Activated CD8-positive, alpha-beta memory T cell treated with anti-CD3 and anti-CD28 coated beads, Interleukin-2, amount 10 ng/mL, durations not matched to agents 7 days and 5 days (primary cell): ENCODE measurements at regions of chr20 and their contacts with region 1.

Region 1: DNA sequence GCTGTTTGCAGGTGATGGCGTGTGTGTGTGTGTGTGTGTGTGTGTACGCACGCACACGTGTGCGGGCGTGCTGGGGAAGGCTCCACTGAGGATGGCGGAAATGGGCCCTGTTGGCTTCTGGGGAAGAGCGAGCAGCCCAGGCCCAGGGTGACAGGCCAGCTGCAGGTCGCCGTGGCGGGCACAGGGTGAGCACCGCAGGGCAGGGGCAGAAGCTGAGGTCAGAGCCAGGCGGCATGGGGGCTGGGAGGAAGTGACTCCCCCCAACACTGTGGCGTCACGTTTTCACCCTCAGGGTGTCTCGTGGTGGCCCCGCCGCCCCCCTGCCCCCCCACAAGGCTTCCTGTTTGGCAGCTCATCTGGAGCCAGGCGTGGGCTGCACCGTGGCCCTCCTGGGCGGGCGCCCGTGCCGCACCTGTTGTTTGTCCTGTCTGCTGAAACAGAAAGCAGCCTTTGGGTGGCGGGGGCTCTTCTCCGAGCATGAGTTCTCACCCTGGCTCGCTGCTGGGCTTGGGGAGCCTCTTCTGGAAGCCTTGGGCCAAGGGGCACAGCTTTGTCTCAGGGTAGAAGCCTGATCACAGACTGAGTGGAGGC is 7.1 kb downstream of the RBM38 start:
- DNase-seq: peak; percentile 92
- ATAC-seq: peak; percentile 76
- H3K4me3 Mint-ChIP-seq: peak overlapping the region; percentile 64
- H3K27ac Mint-ChIP-seq: peak overlapping the region; percentile 86
- H3K4me1 Mint-ChIP-seq: peaks cover 90% of the 10 kb centered on the region
- H3K27me3 Mint-ChIP-seq: no peaks in the 10 kb centered on the region

Region 2: GRCh38 chr20:57048027-57048869 is 350.1 kb before region 1 on chr20:
- CTCF ChIA-PET with region 1: no interaction called
- DNase-seq: no peak
- ATAC-seq: no peak
- H3K4me3 Mint-ChIP-seq: no peak overlapping the region
- H3K27ac Mint-ChIP-seq: no peak overlapping the region
- H3K4me1 Mint-ChIP-seq: no peaks in the 10 kb centered on the region
- H3K27me3 Mint-ChIP-seq: no peaks in the 10 kb centered on the region

Region 3: GRCh38 chr20:57231951-57232428 is 166.3 kb before region 1 on chr20:
- CTCF ChIA-PET with region 1: no interaction called
- DNase-seq: no peak
- ATAC-seq: no peak
- H3K4me3 Mint-ChIP-seq: no peak overlapping the region
- H3K27ac Mint-ChIP-seq: no peak overlapping the region
- H3K4me1 Mint-ChIP-seq: no peaks in the 10 kb centered on the region
- H3K27me3 Mint-ChIP-seq: peaks cover 12% of the 10 kb centered on the region

Region 4: GRCh38 chr20:57329608-57330221 is 68.6 kb before region 1 on chr20 and contains the start of gene SPO11:
- CTCF ChIA-PET with region 1: no interaction called
- DNase-seq: peak; percentile 39
- ATAC-seq: no peak
- H3K4me3 Mint-ChIP-seq: no peak within 1 kb of the TSS
- H3K27ac Mint-ChIP-seq: no peak within 1 kb of the TSS
- H3K4me1 Mint-ChIP-seq: no peaks in the 10 kb centered on the region
- H3K27me3 Mint-ChIP-seq: peaks cover 53% of the 10 kb centered on the region
- total RNA-seq, gene SPO11: not detected

Region 5: DNA sequence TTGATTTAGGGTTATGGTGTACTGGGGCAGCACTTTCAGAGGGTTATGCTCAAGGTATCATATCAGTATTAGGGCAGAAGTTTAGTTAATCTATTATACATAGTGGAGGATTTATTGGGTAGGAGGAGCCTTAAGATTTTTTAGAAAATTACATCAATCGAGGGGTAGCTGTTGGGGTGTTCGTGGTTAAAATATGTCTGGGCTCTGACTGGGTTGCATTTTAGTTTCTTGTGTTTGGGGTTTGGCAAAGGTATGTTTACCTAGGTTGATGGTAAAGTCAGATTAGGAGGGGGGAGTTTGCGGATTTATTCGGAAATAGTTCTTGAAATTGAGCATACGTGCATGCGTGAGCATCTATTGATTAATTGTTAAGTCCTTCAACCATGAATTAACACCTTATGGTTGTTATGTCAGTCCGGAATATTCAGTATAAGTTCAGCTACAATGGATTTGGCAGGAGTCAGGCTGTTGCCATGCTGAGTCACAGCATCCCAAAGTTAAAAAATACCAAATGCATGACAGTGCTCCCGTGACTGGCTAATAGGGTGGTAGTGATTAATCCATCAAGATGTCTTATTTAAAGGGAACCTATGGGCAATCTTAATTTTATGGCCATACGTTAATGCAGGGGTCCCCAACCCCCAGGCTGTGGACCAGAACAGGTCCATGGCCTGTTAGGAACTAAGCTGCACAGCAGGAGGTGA is 37.0 kb before region 1 on chr20:
- CTCF ChIA-PET with region 1: no interaction called
- DNase-seq: no peak
- ATAC-seq: no peak
- H3K4me3 Mint-ChIP-seq: no peak overlapping the region
- H3K27ac Mint-ChIP-seq: no peak overlapping the region
- H3K4me1 Mint-ChIP-seq: no peaks in the 10 kb centered on the region
- H3K27me3 Mint-ChIP-seq: no peaks in the 10 kb centered on the region

Region 6: GRCh38 chr20:57382027-57382503 is 16.3 kb before region 1 on chr20:
- CTCF ChIA-PET with region 1: interaction called, 10 read pairs
- DNase-seq: no peak
- ATAC-seq: no peak
- H3K4me3 Mint-ChIP-seq: no peak overlapping the region
- H3K27ac Mint-ChIP-seq: no peak overlapping the region
- H3K4me1 Mint-ChIP-seq: peaks cover 49% of the 10 kb centered on the region
- H3K27me3 Mint-ChIP-seq: no peaks in the 10 kb centered on the region

Region 7: DNA sequence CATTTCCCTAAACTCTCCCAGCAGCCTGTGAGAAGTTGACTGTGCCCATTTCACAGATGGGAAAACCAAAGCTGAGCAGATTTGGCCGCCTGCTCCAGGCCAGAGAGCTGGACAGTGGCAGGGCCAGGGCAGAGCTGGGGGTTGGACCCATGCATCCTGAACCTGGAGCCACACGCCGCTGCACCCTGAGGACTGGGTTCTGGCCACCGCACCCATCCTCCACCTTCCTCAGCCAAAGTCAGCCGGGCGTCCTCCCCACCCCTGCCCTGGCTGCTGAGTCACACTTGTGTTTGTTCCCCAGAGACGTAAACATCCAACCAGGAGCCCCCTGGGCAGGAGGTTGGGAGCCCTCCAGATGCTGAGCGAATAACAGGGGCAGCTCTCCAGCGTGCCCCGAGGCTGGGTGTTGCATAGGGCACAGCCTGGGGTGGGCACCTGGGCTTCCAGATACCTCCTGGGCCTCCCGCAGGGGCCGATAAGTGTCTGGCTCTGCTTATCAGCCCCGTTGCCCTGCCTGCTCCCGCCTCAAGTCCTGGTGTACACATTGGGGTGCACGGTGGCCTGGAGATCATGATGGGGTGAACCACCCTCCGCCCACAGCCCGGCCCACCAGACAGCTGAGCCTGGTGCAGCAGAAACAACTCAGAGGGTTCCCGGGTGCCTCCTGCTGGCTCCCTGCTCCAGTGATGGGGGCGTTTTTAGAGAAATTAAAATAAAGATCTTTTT is 16.7 kb after region 1 on chr20:
- CTCF ChIA-PET with region 1: interaction called, 10 read pairs
- DNase-seq: no peak
- ATAC-seq: no peak
- H3K4me3 Mint-ChIP-seq: no peak overlapping the region
- H3K27ac Mint-ChIP-seq: no peak overlapping the region
- H3K4me1 Mint-ChIP-seq: peaks cover 25% of the 10 kb centered on the region
- H3K27me3 Mint-ChIP-seq: peaks cover 13% of the 10 kb centered on the region

Region 8: GRCh38 chr20:57432874-57433491 is 34.7 kb after region 1 on chr20:
- CTCF ChIA-PET with region 1: interaction called, 24 read pairs
- DNase-seq: peak; percentile 91
- ATAC-seq: peak; percentile 93
- H3K4me3 Mint-ChIP-seq: no peak overlapping the region
- H3K27ac Mint-ChIP-seq: peak overlapping the region; percentile 86
- H3K4me1 Mint-ChIP-seq: peaks cover 54% of the 10 kb centered on the region
- H3K27me3 Mint-ChIP-seq: peaks cover 15% of the 10 kb centered on the region

Region 9: GRCh38 chr20:57498425-57499400 is 100.4 kb after region 1 on chr20:
- CTCF ChIA-PET with region 1: interaction called, 12 read pairs
- DNase-seq: peak; percentile 50
- ATAC-seq: peak; percentile 85
- H3K4me3 Mint-ChIP-seq: no peak overlapping the region
- H3K27ac Mint-ChIP-seq: no peak overlapping the region
- H3K4me1 Mint-ChIP-seq: peaks cover 15% of the 10 kb centered on the region
- H3K27me3 Mint-ChIP-seq: peaks cover 75% of the 10 kb centered on the region